Activated CD4-positive, alpha-beta memory T cell treated with anti-CD3 and anti-CD28 coated beads for 36 hours (primary cell): ENCODE measurements at regions of chr1 and their contacts with region 1.

Region 1: GRCh38 chr1:93846211-93846991 is 32.6 kb downstream of the DNTTIP2 start:
- DNase-seq: peak; percentile 85
- H3K4me3 Mint-ChIP-seq: peak overlapping the region; percentile 88
- H3K27ac Mint-ChIP-seq: peak overlapping the region; percentile 89
- H3K4me1 Mint-ChIP-seq: peaks cover 27% of the 10 kb centered on the region
- H3K27me3 Mint-ChIP-seq: peaks cover 4% of the 10 kb centered on the region

Region 2: GRCh38 chr1:93179886-93180722 is 666.3 kb before region 1 on chr1 and contains the start of gene TMED5:
- CTCF ChIA-PET with region 1: no interaction called
- POLR2A ChIA-PET with region 1: no interaction called
- intact Hi-C with region 1: loop called (anchors 2 kb)
- DNase-seq: peak; percentile 98
- H3K4me3 Mint-ChIP-seq: peak within 1 kb of the TSS; percentile 88
- H3K27ac Mint-ChIP-seq: peak within 1 kb of the TSS; percentile 97
- H3K4me1 Mint-ChIP-seq: peaks cover 57% of the 10 kb centered on the region
- H3K27me3 Mint-ChIP-seq: no peaks in the 10 kb centered on the region
- total RNA-seq, gene TMED5: 47.0 to 49.2 TPM

Region 3: GRCh38 chr1:93437976-93438605 is 408.3 kb before region 1 on chr1:
- CTCF ChIA-PET with region 1: interaction called, 13 read pairs
- POLR2A ChIA-PET with region 1: no interaction called
- intact Hi-C with region 1: loop called (anchors 1 kb)
- DNase-seq: no peak
- H3K4me3 Mint-ChIP-seq: no peak overlapping the region
- H3K27ac Mint-ChIP-seq: no peak overlapping the region
- H3K4me1 Mint-ChIP-seq: no peaks in the 10 kb centered on the region
- H3K27me3 Mint-ChIP-seq: peaks cover 5% of the 10 kb centered on the region

Region 4: GRCh38 chr1:93531193-93531592 is 315.2 kb before region 1 on chr1:
- CTCF ChIA-PET with region 1: no interaction called
- POLR2A ChIA-PET with region 1: no interaction called
- intact Hi-C with region 1: no loop called
- DNase-seq: no peak
- H3K4me3 Mint-ChIP-seq: no peak overlapping the region
- H3K27ac Mint-ChIP-seq: no peak overlapping the region
- H3K4me1 Mint-ChIP-seq: no peaks in the 10 kb centered on the region
- H3K27me3 Mint-ChIP-seq: no peaks in the 10 kb centered on the region

Region 5: GRCh38 chr1:93692983-93693591 is 153.3 kb before region 1 on chr1:
- CTCF ChIA-PET with region 1: interaction called, 3 read pairs
- POLR2A ChIA-PET with region 1: no interaction called
- intact Hi-C with region 1: loop called (anchors 1 kb)
- DNase-seq: peak; percentile 78
- H3K4me3 Mint-ChIP-seq: peak overlapping the region; percentile 1
- H3K27ac Mint-ChIP-seq: peak overlapping the region; percentile 70
- H3K4me1 Mint-ChIP-seq: peaks cover 14% of the 10 kb centered on the region
- H3K27me3 Mint-ChIP-seq: peaks cover 4% of the 10 kb centered on the region

Region 6: GRCh38 chr1:93798301-93798700 is 48.1 kb before region 1 on chr1:
- CTCF ChIA-PET with region 1: no interaction called
- POLR2A ChIA-PET with region 1: no interaction called
- intact Hi-C with region 1: no loop called
- DNase-seq: no peak
- H3K4me3 Mint-ChIP-seq: no peak overlapping the region
- H3K27ac Mint-ChIP-seq: no peak overlapping the region
- H3K4me1 Mint-ChIP-seq: no peaks in the 10 kb centered on the region
- H3K27me3 Mint-ChIP-seq: peaks cover 2% of the 10 kb centered on the region

Region 7: GRCh38 chr1:93829061-93829460 is 17.3 kb before region 1 on chr1:
- CTCF ChIA-PET with region 1: no interaction called
- POLR2A ChIA-PET with region 1: no interaction called
- intact Hi-C with region 1: no loop called
- DNase-seq: no peak
- H3K4me3 Mint-ChIP-seq: no peak overlapping the region
- H3K27ac Mint-ChIP-seq: no peak overlapping the region
- H3K4me1 Mint-ChIP-seq: no peaks in the 10 kb centered on the region
- H3K27me3 Mint-ChIP-seq: no peaks in the 10 kb centered on the region

Region 8: DNA sequence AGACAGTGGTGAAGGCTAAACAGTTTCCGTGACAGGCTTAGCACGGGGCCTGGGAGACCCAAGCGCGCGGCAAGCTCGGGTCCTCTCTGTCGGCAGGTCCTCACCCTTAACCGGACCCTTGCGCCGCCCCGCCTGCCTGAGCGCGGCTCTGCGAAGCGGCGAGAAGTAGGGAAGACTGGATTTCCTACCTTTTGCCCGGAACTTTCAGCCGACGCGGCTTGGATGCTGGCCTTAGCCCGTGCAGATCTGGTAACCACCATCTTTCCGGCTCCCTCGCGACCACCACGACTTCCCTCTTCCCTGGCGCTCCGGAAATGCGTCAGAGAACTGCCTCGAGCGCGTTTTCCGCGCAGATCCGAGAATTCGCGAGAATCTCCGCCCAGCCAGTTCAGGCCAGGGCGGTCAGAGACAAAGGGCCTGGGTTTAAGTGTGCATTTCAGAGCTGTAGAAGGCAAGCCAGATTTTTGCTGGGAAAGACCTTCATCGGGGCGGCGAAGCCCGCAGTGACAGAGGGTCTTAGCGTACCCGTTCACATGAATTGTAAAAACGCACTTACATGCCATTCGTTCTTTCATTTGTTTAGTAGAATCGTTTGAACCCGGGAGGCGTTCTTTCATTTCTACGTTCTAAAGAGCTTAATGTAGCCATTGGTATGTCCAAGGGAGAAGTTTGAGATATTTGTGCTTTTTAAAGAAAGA is 32.6 kb after region 1 on chr1 and contains the start of gene DNTTIP2:
- CTCF ChIA-PET with region 1: interaction called, 7 read pairs
- POLR2A ChIA-PET with region 1: interaction called, 5 read pairs
- intact Hi-C with region 1: loop called (anchors 1 kb)
- DNase-seq: peak; percentile 94
- H3K4me3 Mint-ChIP-seq: peak within 1 kb of the TSS; percentile 94
- H3K27ac Mint-ChIP-seq: peak within 1 kb of the TSS; percentile 98
- H3K4me1 Mint-ChIP-seq: peaks cover 42% of the 10 kb centered on the region
- H3K27me3 Mint-ChIP-seq: no peaks in the 10 kb centered on the region
- total RNA-seq, gene DNTTIP2: 84.4 to 91.1 TPM

Region 9: DNA sequence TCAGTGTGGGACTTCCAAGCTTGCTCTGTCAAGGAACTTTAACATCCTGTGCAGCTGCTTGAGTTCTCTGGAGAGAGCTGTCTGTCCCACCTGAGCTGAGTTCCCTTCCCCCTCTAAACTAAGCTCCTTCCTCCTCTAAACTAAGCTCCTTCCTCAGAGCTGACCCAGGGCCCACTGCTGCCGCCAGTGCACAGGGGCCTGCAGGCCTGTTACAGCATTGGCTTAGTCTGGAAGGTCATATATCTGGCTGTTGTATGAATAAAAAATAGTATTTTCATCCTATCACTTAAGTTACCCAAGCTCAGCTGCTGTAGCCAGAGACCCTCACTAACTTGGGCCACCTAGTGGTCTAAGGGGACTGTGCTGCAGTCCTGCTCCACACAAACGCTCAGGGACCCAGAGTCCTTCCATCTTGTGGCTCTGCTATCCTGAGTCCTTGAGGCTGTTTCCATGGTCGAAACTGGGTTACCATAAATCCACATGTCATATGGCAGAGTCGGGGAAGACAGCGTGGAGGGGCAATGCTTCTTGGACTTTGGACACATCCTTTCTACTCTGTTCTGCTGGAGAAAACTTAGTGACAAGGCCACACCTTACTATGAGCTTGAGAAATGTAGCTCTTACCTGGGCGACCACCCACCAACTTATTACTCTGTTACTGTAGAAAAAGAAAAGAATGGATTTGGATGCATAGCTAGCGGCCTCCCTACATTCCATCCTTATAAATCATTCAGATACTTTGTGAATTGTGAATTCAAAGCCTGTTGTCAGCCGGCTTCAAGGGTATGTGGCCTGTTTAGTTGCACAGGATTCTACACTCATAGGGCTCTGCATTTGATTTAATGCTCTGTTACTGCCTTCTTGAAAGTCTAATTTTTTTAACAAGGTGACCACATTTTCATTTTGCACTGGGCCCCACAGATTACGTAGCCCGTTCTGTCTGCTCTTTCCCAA is 134.2 kb after region 1 on chr1:
- CTCF ChIA-PET with region 1: no interaction called
- POLR2A ChIA-PET with region 1: no interaction called
- intact Hi-C with region 1: no loop called
- DNase-seq: no peak
- H3K4me3 Mint-ChIP-seq: no peak overlapping the region
- H3K27ac Mint-ChIP-seq: no peak overlapping the region
- H3K4me1 Mint-ChIP-seq: no peaks in the 10 kb centered on the region
- H3K27me3 Mint-ChIP-seq: peaks cover 4% of the 10 kb centered on the region

Region 10: GRCh38 chr1:94417978-94418663 is 571.7 kb after region 1 on chr1 and contains the start of gene ABCD3:
- CTCF ChIA-PET with region 1: no interaction called
- POLR2A ChIA-PET with region 1: no interaction called
- intact Hi-C with region 1: loop called (anchors 1 kb)
- DNase-seq: peak; percentile 98
- H3K4me3 Mint-ChIP-seq: no peak within 1 kb of the TSS
- H3K27ac Mint-ChIP-seq: peak within 1 kb of the TSS; percentile 55
- H3K4me1 Mint-ChIP-seq: peaks cover 35% of the 10 kb centered on the region
- H3K27me3 Mint-ChIP-seq: peaks cover 2% of the 10 kb centered on the region
- total RNA-seq, gene ABCD3: 33.7 to 34.0 TPM